ENCODE measurements at regions of chr11 and their contacts with region 1.

Region 1: GRCh38 chr11:116224154-116224888 is 548.5 kb downstream of the BUD13 start:
- DNase-seq: peak in 7 of 10 donors; percentile 51 to 91 (median 56)

Region 2: DNA sequence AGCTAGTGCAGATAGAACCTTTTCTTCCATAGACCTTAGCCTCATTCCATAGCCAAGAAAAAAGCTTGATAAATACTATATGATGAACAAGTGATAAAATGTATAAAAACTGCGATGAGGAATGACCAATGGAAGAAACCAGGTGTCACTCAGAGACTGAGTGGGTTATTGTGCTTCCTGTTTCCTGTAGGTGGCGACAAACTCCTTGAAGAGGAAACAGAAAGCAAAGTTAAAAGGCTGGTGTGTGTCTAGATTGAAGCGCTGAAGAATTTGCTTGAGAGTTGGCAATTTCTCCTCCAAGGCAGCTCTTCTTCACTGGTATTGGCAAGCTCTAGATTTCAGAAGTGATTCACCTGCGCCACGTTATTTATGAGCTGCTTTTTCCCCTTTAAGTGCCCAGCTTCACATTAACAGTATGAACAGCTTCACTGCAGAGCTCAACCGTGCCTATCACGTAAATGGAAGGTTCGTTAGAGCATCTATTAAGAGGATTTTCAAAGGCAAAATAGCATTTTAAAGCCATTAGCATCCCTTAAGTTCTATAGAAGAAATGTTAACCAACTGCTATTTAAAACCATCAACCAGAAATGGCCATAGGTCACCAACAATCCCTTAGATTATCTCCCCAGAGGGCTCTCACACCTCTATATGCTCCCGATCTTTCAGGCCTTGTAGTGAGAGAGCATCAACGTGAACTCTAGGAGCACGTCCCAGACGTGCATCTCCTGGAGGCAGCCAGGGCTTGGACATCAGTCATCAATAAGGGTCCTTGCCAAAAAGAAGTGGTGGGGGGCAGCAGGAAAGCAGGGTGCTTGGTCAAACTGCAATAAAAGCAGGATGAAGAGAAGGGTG is 899.5 kb before region 1 on chr11:
- intact Hi-C with region 1: loop called (anchors 5 kb)
- DNase-seq: peak in 2 of 10 donors; percentile 18 to 38